T-cell (primary cell): ENCODE measurements at regions of chr3 and their contacts with region 1.

Region 1: GRCh38 chr3:194025119-194025518 is 110.8 kb upstream of the HES1 start:
- DNase-seq: no peak
- ATAC-seq: no peak
- H3K4me3 ChIP-seq: no peak overlapping the region
- H3K4me3 Mint-ChIP-seq: no peak overlapping the region
- H3K27ac ChIP-seq: no peak overlapping the region
- H3K27ac Mint-ChIP-seq: no peak overlapping the region
- H3K4me1 ChIP-seq: peaks cover 3 to 5% of the 10 kb centered on the region in 2 experiments
- H3K4me1 Mint-ChIP-seq: peaks cover 7 to 22% (median 17%) of the 10 kb centered on the region in 3 donors
- H3K27me3 ChIP-seq: peaks cover 0 to 9% of the 10 kb centered on the region in 2 experiments
- H3K27me3 Mint-ChIP-seq: peaks cover 4 to 6% of the 10 kb centered on the region in 2 donors

Region 2: DNA sequence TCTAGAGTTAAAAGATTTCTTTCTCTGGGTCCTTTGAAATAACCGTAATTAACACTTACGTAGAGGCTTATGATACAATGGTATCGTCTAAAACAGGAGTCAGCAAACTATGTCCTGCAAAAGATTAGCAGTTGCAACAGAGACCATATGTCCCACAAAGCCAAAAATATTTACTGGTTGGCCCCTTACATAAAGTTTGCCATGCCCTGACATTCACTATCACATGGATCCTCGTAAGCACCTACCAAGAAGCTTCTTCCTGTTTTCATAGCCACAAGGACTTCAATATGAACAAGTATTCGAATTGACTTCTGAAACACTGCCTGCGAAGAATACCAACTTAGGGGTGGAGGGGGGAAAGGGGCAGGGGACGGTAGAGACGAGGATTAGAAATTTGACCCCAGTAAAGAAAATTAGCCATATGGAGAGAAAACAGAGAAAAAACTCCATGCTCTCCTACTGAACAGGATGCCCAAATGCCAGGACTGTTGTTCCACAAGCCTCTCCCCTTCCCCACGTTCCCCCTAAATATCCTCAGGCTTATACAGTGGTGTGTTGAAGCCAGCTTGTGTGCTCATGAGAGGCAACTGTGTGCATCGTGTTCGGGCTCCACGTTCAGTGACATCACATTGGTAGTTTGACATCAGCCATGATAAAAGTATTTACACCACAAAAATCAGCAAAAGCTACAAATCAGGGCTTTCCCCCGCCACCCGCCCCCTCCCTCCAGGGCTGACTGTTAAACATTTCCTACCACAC is 33.3 kb before region 1 on chr3:
- CTCF ChIA-PET with region 1: no interaction called
- POLR2A ChIA-PET with region 1: no interaction called
- DNase-seq: no peak
- ATAC-seq: no peak
- H3K4me3 ChIP-seq: no peak overlapping the region
- H3K4me3 Mint-ChIP-seq: no peak overlapping the region
- H3K27ac ChIP-seq: no peak overlapping the region
- H3K27ac Mint-ChIP-seq: no peak overlapping the region
- H3K4me1 ChIP-seq: peaks cover 0 to 2% of the 10 kb centered on the region in 2 experiments
- H3K4me1 Mint-ChIP-seq: no peaks in the 10 kb centered on the region
- H3K27me3 ChIP-seq: peaks cover 0 to 14% of the 10 kb centered on the region in 2 experiments
- H3K27me3 Mint-ChIP-seq: peaks cover 6 to 12% of the 10 kb centered on the region in 2 donors

Region 3: DNA sequence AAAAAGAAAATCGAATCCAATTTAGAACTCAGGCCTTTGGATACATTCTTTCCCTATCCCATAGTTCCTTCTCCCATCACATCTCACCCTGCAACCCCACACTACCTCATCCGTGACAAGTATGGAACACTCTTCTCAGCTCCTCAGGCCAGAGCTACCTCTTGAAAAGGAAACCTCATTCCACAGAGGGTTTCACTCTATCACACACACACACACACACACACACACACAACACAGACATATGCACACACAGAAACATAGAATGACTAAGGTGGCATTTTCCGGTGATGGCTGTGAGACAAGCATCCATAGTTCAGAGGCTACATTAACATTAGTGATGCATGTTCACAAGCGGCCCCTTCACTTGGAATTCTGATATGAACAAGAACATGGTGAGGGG is 11.2 kb before region 1 on chr3:
- CTCF ChIA-PET with region 1: no interaction called
- POLR2A ChIA-PET with region 1: interaction called in 1 of 2 experiments, 10 read pairs
- DNase-seq: no peak
- ATAC-seq: no peak
- H3K4me3 ChIP-seq: no peak overlapping the region
- H3K4me3 Mint-ChIP-seq: no peak overlapping the region
- H3K27ac ChIP-seq: no peak overlapping the region
- H3K27ac Mint-ChIP-seq: no peak overlapping the region
- H3K4me1 ChIP-seq: no peaks in the 10 kb centered on the region
- H3K4me1 Mint-ChIP-seq: no peaks in the 10 kb centered on the region
- H3K27me3 ChIP-seq: peaks cover 0 to 3% of the 10 kb centered on the region in 2 experiments
- H3K27me3 Mint-ChIP-seq: peaks cover 1 to 4% of the 10 kb centered on the region in 2 donors